ENCODE measurements at regions of chr17 and their contacts with region 1.

Region 1: GRCh38 chr17:29219378-29220047 is 27.1 kb upstream of the CRYBA1 start:
- DNase-seq: peak; percentile 56 to 83
- ATAC-seq: peak; percentile 87 to 96 (median 91)
- H3K4me3 ChIP-seq: no peak overlapping the region
- H3K27ac ChIP-seq: no peak overlapping the region
- H3K4me1 ChIP-seq: peaks cover 0 to 11% (median 8%) of the 10 kb centered on the region in 9 donors
- H3K27me3 ChIP-seq: no peaks in the 10 kb centered on the region
- CTCF ChIP-seq: peak; percentile 88 to 97 (median 92)

Region 2: GRCh38 chr17:28701987-28702751 is 517.3 kb before region 1 on chr17:
- intact Hi-C with region 1: loop called in 1 of 10 experiments (anchors 5 kb)
- DNase-seq: no peak
- ATAC-seq: no peak
- H3K4me3 ChIP-seq: no peak overlapping the region
- H3K27ac ChIP-seq: no peak overlapping the region
- H3K4me1 ChIP-seq: no peaks in the 10 kb centered on the region
- H3K27me3 ChIP-seq: no peaks in the 10 kb centered on the region
- CTCF ChIP-seq: no peak

Region 3: DNA sequence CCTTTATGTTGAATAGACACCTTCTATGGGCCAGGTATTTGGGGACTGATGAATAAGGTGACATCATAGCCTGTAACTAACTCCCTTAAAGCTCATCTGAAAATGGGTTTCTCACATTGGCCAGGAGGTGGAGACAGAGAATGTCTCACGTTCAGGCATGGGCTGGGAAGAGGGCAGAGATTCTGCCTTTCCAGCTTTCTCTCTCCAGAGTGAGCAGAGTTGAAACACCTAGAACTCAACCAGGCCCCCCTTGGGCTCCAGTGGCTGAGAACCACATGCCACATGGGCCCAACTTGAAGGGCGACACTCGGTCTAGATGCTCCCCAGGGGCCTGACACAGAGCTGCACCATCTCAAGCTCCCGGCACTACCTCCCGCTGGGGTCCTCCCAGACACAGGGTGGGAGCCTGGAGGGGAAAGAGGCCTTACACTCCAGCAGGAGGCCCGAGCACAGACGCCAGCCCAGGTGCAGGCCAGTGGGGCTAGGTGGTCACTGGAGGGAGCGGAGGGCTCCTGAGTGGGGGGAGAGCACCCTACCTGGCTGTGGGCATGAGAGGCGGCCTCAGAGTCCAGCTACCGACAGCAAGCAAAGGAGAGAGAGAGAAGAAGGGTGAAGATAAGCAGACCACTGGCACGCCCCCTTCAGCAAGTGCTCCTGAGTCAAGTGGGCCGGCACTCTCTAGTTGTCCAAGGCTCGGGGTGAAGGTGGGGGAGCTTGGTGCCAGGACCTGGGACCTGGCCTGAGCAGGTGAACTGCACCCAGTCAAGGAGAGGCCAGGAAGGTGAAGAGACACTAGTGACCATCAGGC is 95.2 kb before region 1 on chr17:
- intact Hi-C with region 1: loop called in 3 of 10 experiments (anchors 1 to 5 kb)
- DNase-seq: peak in 1 of 2 donors; percentile 71
- ATAC-seq: peak; percentile 47 to 85 (median 78)
- H3K4me3 ChIP-seq: no peak overlapping the region
- H3K27ac ChIP-seq: peak overlapping the region in 7 of 10 donors; percentile 0 to 58 (median 47)
- H3K4me1 ChIP-seq: peaks cover 25 to 51% (median 38%) of the 10 kb centered on the region in 9 donors
- H3K27me3 ChIP-seq: no peaks in the 10 kb centered on the region
- CTCF ChIP-seq: peak; percentile 42 to 81 (median 70)

Region 4: DNA sequence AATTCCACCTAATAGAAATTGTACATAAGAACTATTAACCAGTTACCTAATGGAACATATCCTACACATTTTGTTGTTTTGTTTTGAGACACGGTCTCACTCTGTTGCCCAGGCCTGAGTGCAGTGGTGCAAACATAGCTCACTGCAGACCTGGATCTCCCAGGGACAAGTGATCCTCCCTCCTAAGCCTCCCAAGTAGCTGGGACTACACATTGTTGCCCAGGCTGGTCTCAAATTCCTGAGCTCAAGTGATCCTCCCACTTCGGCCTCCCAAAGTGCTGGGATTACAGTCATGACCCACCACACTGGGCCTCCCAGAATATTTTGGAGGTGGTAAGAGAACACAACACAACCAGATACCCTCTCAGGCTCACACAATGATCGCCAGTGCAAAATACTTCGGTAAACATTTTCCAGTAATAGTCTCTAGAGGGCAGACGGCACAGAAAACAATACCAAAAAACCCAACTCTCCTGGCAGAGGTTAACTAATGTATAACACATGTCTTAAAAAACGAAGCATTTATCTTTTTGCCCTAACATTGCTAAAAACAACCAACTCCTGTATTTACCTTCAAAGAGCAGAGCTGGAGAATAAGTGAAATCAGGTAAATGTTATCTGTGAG is 63.9 kb after region 1 on chr17:
- intact Hi-C with region 1: loop called in 1 of 10 experiments (anchors 10 kb)
- DNase-seq: no peak
- ATAC-seq: no peak
- H3K4me3 ChIP-seq: no peak overlapping the region
- H3K27ac ChIP-seq: no peak overlapping the region
- H3K4me1 ChIP-seq: peaks cover 9 to 83% (median 68%) of the 10 kb centered on the region in 9 donors
- H3K27me3 ChIP-seq: no peaks in the 10 kb centered on the region
- CTCF ChIP-seq: peak in 4 of 9 donors; percentile 6 to 27 (median 10)

Measured in heart right ventricle (tissue), 16 donors.